HEK293 (cell line): ENCODE measurements at regions of chr15 and their contacts with region 1.

Region 1: GRCh38 chr15:76336254-76337058 is at the start of gene ISL2:
- H3K4me3 ChIP-seq: peak within 1 kb of the TSS; percentile 78
- H3K27ac ChIP-seq: peak within 1 kb of the TSS; percentile 96
- H3K4me1 ChIP-seq: peaks cover 3% of the 10 kb centered on the region; the same call in 1 of the 2 replicates
- CTCF ChIP-seq: no peak

Region 2: GRCh38 chr15:76177491-76178040 is 158.9 kb before region 1 on chr15:
- CTCF ChIA-PET with region 1: no interaction called
- POLR2A ChIA-PET with region 1: no interaction called
- H3K4me3 ChIP-seq: no peak overlapping the region
- H3K27ac ChIP-seq: no peak overlapping the region
- H3K4me1 ChIP-seq: no peaks in the 10 kb centered on the region
- CTCF ChIP-seq: no peak

Region 3: DNA sequence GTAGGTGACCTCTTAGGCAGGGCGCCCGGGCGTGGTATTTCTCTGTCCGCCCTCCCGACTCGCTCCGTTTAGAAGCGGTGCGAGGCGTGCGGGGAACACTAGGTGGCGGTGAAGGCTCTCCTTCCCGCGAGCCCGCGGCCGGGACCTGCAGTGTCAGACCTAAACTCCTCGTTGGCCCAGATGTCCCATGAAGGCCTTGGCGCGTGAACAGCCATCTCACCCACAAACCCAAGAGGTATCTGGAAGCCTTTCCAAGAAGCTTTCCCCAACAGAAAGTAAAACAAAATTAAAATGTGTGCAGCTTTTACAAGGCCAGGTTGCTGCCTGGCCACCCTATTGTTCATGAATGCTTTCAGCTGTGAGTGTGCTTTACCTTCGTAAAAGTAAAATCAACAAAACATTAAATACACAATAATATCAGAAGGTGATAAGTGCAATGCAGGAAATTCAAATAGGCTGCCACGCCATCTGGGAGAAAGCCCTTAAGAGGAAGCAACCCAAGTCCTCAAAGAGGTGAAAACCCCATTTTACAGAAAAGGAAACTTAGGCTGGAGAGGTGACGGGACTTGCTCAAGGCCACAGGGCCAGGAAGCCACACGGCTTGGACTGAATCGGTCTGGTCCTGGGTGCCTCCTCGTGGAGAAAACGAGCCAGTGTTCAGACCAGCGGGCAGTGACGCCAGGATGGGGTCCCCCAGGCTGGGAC is 145.5 kb before region 1 on chr15:
- CTCF ChIA-PET with region 1: interaction called, 10 read pairs
- POLR2A ChIA-PET with region 1: interaction called, 9 read pairs
- H3K4me3 ChIP-seq: no peak overlapping the region
- H3K27ac ChIP-seq: peak overlapping the region; percentile 33; the same call in 1 of the 2 replicates
- H3K4me1 ChIP-seq: peaks cover 3% of the 10 kb centered on the region
- CTCF ChIP-seq: peak; percentile 94

Region 4: DNA sequence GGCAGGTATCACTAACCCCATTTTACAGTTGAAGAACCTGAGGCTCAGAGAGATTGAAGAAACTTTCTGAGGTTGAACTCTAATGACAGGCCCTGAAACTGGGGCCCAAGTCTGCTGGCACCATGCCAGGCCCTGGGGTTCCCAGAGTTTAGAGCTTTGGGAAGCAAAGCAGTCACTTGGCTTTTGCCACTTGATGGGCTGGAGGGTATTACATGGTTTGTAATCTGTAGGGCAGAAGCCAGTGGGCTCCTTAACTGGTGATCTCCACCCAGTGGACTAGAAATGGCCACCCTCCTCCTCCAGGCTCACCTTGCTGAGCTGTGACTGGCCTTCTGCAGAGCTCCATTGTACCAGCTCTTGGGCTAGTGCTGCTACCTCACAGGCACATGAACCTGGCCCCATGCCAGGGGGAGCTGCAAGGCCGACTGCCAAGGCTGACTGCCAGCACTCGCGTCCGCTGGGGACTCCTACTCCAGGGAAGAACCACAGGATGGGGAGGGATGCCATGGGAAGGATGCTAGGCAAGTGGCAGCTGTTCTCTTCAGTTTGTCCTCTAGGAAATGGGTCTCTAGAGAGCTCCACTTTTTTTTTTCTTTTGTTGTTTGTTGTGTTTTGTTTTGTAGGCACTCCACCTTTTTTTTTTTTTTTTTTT is 130.0 kb before region 1 on chr15:
- CTCF ChIA-PET with region 1: interaction called, 5 read pairs
- POLR2A ChIA-PET with region 1: interaction called, 13 read pairs
- H3K4me3 ChIP-seq: no peak overlapping the region
- H3K27ac ChIP-seq: no peak overlapping the region
- H3K4me1 ChIP-seq: no peaks in the 10 kb centered on the region
- CTCF ChIP-seq: no peak

Region 5: DNA sequence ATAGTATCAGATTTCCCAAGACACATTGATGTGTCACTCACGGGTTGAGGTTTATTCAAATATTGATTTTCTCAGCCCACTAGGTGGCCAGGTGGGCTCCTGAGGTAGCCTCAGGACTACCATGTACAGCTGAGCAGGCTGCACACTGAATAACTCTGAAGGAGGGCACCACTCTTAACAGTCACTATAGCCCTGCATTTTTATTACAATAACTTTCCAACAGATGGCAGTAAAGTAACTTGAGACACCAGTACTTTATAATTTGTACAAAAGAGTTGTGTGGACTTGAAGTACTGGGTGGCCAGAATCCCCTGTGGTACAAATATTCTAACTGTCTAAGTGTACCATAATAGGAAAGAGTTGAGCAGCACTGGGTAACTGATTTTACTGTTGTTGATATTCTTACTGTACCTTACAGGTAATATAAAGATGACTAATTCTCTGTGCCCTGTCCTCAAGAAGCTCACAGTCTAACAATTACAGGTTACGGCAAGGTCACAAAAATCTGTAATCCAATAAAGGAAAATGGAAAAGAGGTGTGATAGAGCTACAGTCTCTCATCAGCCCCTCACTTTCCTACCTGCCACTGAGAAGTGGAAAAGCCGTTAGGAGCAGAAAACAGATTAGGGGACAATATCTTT is 101.2 kb before region 1 on chr15:
- CTCF ChIA-PET with region 1: interaction called, 32 read pairs
- POLR2A ChIA-PET with region 1: interaction called, 13 read pairs
- H3K4me3 ChIP-seq: no peak overlapping the region
- H3K27ac ChIP-seq: no peak overlapping the region
- H3K4me1 ChIP-seq: peaks cover 28% of the 10 kb centered on the region
- CTCF ChIP-seq: peak; percentile 24; the same call in 1 of the 2 replicates

Region 6: GRCh38 chr15:76324066-76324465 is 12.4 kb before region 1 on chr15:
- CTCF ChIA-PET with region 1: interaction called, 3 read pairs
- POLR2A ChIA-PET with region 1: interaction called, 25 read pairs
- H3K4me3 ChIP-seq: no peak overlapping the region
- H3K27ac ChIP-seq: no peak overlapping the region
- H3K4me1 ChIP-seq: peaks cover 30% of the 10 kb centered on the region
- CTCF ChIP-seq: no peak

Region 7: GRCh38 chr15:76363224-76363623 is 26.8 kb after region 1 on chr15:
- CTCF ChIA-PET with region 1: no interaction called
- POLR2A ChIA-PET with region 1: no interaction called
- H3K4me3 ChIP-seq: no peak overlapping the region
- H3K27ac ChIP-seq: no peak overlapping the region
- H3K4me1 ChIP-seq: no peaks in the 10 kb centered on the region
- CTCF ChIP-seq: no peak

Region 8: GRCh38 chr15:76684002-76684401 is 347.5 kb after region 1 on chr15:
- CTCF ChIA-PET with region 1: no interaction called
- POLR2A ChIA-PET with region 1: no interaction called
- H3K4me3 ChIP-seq: no peak overlapping the region
- H3K27ac ChIP-seq: no peak overlapping the region
- H3K4me1 ChIP-seq: no peaks in the 10 kb centered on the region
- CTCF ChIP-seq: no peak